Activated B cell treated with CpG ODN at 0.5 μM for 24 hours (primary cell): ENCODE measurements at regions of chr1 and their contacts with region 1.

Region 1: DNA sequence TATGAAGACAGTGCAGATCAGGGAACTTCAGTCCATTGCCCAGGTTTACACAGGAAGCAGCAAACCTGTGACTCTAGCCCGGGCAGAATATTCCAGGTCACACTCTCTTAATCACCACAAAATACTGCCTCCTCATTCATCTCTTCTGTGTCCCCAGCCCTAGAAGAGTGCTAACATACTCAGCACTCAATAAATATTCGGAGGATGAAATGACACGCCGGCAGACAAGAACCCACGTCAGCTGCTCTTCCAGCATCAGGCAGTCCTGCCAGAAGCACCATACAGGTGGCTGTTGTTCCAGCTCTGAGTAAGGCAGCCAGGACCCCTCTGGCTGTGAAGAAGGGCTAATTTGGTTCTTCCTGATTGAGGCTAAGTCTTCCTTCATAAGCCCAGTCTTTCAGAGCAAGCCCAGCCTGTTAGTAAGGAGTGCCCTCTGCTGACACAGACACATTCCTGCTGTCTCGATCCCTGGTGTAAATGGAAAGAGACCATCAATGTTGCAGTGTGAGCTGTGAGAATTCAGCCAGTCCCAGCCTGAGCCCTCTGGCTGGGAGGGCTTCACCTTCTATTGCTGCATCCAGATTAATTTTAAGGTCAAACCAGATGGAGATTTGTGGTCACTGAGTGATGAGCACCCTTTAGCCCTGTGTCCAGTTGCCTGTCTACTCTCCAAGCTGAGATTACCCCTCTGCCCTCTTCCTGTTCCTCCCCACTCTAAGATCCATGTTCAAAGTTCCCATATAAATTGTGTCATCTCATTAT is 45.0 kb upstream of the KIRREL1 start:
- DNase-seq: no peak
- ATAC-seq: peak; percentile 77
- H3K4me3 Mint-ChIP-seq: no peak overlapping the region
- H3K27ac Mint-ChIP-seq: no peak overlapping the region
- H3K4me1 Mint-ChIP-seq: peaks cover 24% of the 10 kb centered on the region
- H3K27me3 Mint-ChIP-seq: peaks cover 6% of the 10 kb centered on the region
- CTCF ChIP-seq: peak; percentile 52

Region 2: GRCh38 chr1:157369808-157370521 is 578.5 kb before region 1 on chr1:
- CTCF ChIA-PET with region 1: interaction called, 5 read pairs
- POLR2A ChIA-PET with region 1: no interaction called
- intact Hi-C with region 1: loop called (anchors 1 kb)
- DNase-seq: no peak
- ATAC-seq: peak; percentile 77
- H3K4me3 Mint-ChIP-seq: no peak overlapping the region
- H3K27ac Mint-ChIP-seq: no peak overlapping the region
- H3K4me1 Mint-ChIP-seq: no peaks in the 10 kb centered on the region
- H3K27me3 Mint-ChIP-seq: no peaks in the 10 kb centered on the region
- CTCF ChIP-seq: peak; percentile 96

Region 3: GRCh38 chr1:157490467-157491165 is 457.9 kb before region 1 on chr1:
- CTCF ChIA-PET with region 1: no interaction called
- POLR2A ChIA-PET with region 1: no interaction called
- intact Hi-C with region 1: no loop called
- DNase-seq: peak; percentile 55
- ATAC-seq: peak; percentile 62
- H3K4me3 Mint-ChIP-seq: no peak overlapping the region
- H3K27ac Mint-ChIP-seq: no peak overlapping the region
- H3K4me1 Mint-ChIP-seq: peaks cover 3% of the 10 kb centered on the region
- H3K27me3 Mint-ChIP-seq: no peaks in the 10 kb centered on the region
- CTCF ChIP-seq: no peak

Region 4: GRCh38 chr1:157505481-157506272 is 442.8 kb before region 1 on chr1:
- CTCF ChIA-PET with region 1: no interaction called
- POLR2A ChIA-PET with region 1: no interaction called
- intact Hi-C with region 1: loop called (anchors 5 kb)
- DNase-seq: peak; percentile 33
- ATAC-seq: peak; percentile 98
- H3K4me3 Mint-ChIP-seq: peak overlapping the region; percentile 69
- H3K27ac Mint-ChIP-seq: peak overlapping the region; percentile 50
- H3K4me1 Mint-ChIP-seq: peaks cover 37% of the 10 kb centered on the region
- H3K27me3 Mint-ChIP-seq: no peaks in the 10 kb centered on the region
- CTCF ChIP-seq: no peak

Region 5: DNA sequence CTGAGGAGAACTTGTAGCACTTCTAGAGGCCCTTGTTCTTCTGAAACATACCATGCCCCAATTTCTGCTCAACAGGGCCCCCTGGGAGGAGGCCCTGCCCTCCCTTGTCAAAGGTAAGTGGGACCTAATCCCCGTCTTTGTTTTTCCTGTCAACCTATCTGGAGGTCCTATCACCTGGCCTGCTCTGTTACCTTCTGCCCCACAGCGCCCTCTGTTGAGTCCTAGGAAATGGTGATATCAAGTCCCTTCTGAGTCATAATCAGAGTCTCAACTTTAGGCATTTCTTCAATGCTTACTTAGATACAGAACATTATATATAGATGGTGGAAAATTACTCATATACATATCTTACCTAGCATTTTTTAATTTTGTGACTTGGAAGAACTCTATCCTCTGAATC is 322.4 kb before region 1 on chr1:
- CTCF ChIA-PET with region 1: no interaction called
- POLR2A ChIA-PET with region 1: no interaction called
- intact Hi-C with region 1: loop called (anchors 2 kb)
- DNase-seq: peak; percentile 36
- ATAC-seq: peak; percentile 78
- H3K4me3 Mint-ChIP-seq: no peak overlapping the region
- H3K27ac Mint-ChIP-seq: no peak overlapping the region
- H3K4me1 Mint-ChIP-seq: peaks cover 16% of the 10 kb centered on the region
- H3K27me3 Mint-ChIP-seq: no peaks in the 10 kb centered on the region
- CTCF ChIP-seq: peak; percentile 47

Region 6: DNA sequence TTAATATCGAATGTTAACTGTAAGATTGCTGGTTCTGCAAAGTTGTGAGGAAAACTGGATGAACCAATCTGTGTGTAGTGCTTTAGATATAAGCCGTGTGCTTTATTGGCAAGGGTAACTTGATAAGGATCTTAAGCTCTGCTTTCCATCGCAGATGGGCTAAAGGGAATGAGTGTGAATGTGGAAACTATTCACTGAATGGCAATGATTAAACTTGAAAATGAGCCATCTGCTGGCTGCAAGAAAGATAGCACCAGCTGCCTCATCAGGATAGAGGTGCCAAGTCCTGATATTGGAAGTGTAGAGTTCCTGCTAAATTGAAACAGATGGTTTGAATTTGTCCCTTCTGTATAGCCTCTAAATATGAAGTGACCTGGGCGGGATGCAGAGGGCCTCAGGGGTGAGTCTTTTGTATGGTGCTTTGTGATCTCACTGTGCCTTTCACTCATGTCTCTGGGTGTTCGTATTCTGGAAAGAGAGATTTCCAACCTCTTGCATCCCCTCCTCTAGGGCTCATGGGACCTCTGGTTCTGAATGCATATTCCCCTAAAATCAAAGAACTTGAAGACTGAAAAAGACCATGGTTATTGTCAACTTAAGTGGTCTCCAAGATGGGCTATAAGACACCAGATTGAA is 257.1 kb before region 1 on chr1:
- CTCF ChIA-PET with region 1: interaction called, 4 read pairs
- POLR2A ChIA-PET with region 1: no interaction called
- intact Hi-C with region 1: loop called (anchors 5 kb)
- DNase-seq: no peak
- ATAC-seq: peak; percentile 62
- H3K4me3 Mint-ChIP-seq: no peak overlapping the region
- H3K27ac Mint-ChIP-seq: peak overlapping the region; percentile 69
- H3K4me1 Mint-ChIP-seq: peaks cover 86% of the 10 kb centered on the region
- H3K27me3 Mint-ChIP-seq: no peaks in the 10 kb centered on the region
- CTCF ChIP-seq: no peak

Region 7: GRCh38 chr1:157878059-157878458 is 70.4 kb before region 1 on chr1:
- CTCF ChIA-PET with region 1: interaction called, 14 read pairs
- POLR2A ChIA-PET with region 1: interaction called, 4 read pairs
- intact Hi-C with region 1: loop called (anchors 1 kb)
- DNase-seq: no peak
- ATAC-seq: peak; percentile 54
- H3K4me3 Mint-ChIP-seq: no peak overlapping the region
- H3K27ac Mint-ChIP-seq: no peak overlapping the region
- H3K4me1 Mint-ChIP-seq: peaks cover 19% of the 10 kb centered on the region
- H3K27me3 Mint-ChIP-seq: no peaks in the 10 kb centered on the region
- CTCF ChIP-seq: no peak

Region 8: DNA sequence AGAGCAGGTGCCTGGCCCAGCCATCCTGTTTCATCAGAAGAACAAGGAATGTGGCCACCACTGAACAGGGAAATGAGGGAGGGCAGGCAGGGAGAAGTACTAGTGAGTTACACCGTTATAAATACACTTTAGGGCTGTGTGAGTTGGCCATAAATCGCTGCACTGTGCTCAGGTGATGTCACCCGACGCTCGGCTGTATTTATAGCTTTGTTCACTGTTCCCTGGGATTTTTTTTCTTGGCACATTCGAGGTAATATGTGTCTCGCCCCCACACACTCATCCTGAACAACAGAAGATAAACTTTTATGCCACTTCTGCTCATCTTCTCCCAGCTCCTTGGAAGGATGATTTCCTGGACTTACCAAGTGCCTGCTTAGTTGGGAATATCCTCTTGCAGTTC is 36.0 kb after region 1 on chr1:
- CTCF ChIA-PET with region 1: no interaction called
- POLR2A ChIA-PET with region 1: no interaction called
- intact Hi-C with region 1: no loop called
- DNase-seq: no peak
- ATAC-seq: no peak
- H3K4me3 Mint-ChIP-seq: no peak overlapping the region
- H3K27ac Mint-ChIP-seq: no peak overlapping the region
- H3K4me1 Mint-ChIP-seq: no peaks in the 10 kb centered on the region
- H3K27me3 Mint-ChIP-seq: peaks cover 9% of the 10 kb centered on the region
- CTCF ChIP-seq: no peak

Region 9: GRCh38 chr1:158011714-158012113 is 63.2 kb after region 1 on chr1:
- CTCF ChIA-PET with region 1: no interaction called
- POLR2A ChIA-PET with region 1: no interaction called
- intact Hi-C with region 1: no loop called
- DNase-seq: no peak
- ATAC-seq: no peak
- H3K4me3 Mint-ChIP-seq: no peak overlapping the region
- H3K27ac Mint-ChIP-seq: no peak overlapping the region
- H3K4me1 Mint-ChIP-seq: no peaks in the 10 kb centered on the region
- H3K27me3 Mint-ChIP-seq: peaks cover 50% of the 10 kb centered on the region
- CTCF ChIP-seq: no peak

Region 10: DNA sequence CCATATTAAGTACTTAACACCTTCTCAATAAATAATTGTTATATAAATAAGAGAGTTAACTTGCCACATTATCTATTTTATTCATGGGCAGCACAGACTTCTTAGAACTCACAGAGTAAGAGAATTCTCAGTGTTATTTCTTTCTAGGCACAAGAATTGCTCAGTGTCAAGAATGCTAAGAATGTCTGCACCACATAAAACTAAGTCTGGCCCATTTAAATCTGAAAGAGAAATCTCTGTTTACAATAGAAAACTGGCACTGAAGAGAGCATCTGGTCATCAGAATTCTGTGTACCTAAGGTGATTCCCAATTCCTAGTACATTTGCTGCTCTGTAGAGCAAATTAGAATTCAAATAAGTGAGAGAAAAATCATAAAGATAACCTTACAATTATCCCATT is 473.7 kb after region 1 on chr1:
- CTCF ChIA-PET with region 1: no interaction called
- POLR2A ChIA-PET with region 1: no interaction called
- intact Hi-C with region 1: no loop called
- DNase-seq: no peak
- ATAC-seq: no peak
- H3K4me3 Mint-ChIP-seq: no peak overlapping the region
- H3K27ac Mint-ChIP-seq: no peak overlapping the region
- H3K4me1 Mint-ChIP-seq: no peaks in the 10 kb centered on the region
- H3K27me3 Mint-ChIP-seq: peaks cover 3% of the 10 kb centered on the region
- CTCF ChIP-seq: no peak